ENCODE measurements at regions of chr6 and their contacts with region 1.

Region 1: DNA sequence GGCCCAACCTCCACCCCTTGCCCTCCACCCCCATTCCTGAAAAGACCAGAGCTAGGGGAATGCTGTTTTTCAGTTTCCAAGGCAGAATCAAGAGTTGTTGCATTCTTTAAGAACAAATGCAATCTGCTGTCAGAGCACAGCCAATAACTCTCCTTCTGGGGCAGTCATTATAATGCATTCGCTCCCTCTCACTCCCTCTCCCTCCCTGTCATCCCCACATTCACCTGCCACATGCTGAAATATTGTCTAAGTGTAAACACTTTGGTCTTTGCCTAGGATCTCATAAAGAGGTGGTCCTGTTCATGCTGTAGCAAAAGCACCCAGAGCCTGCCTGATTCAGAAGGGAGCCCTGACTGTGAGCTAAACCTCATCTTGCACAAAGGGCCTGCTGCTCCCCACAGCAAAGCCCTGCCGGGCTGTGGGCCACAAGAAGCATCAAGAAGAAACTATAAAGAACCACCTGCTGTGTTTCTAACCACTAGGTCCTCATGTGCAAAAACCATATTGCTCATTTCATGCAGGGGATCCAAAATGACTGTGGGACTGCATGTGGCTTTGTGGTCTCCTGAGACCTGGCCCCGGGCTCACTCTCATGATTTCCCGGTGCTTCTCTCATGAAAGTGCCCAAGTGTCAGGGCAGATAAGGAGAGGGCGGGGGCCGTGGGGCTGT is 85.6 kb downstream of the GPR6 start:
- DNase-seq: no peak
- H3K4me3 ChIP-seq: no peak overlapping the region
- H3K27ac ChIP-seq: peak overlapping the region in 4 of 59 donors; percentile 12 to 29 (median 21)
- H3K27me3 ChIP-seq: peaks cover 0 to 5% (median 0%) of the 10 kb centered on the region in 45 donors
- CTCF ChIP-seq: no peak

Region 2: DNA sequence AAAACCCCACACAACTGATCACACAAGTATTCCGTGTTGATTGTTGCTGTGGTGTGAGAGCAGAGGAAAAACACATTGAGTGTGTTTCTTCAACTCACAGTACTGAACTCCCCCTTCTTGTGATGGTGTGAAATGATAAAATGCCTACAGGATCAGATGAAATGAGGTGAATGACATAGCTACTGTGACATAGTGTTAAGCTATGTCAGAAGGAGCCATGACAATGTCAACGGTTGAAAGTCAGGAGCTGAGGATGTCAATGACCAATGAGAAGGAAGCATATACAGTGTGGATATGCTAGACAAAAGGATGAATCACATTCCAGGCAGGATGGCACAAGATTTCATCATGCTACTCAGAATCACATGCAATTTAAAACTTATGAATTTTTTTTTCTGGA is 76.9 kb after region 1 on chr6:
- intact Hi-C with region 1: no loop called
- DNase-seq: no peak
- H3K4me3 ChIP-seq: no peak overlapping the region
- H3K27ac ChIP-seq: no peak overlapping the region
- H3K27me3 ChIP-seq: no peaks in the 10 kb centered on the region
- CTCF ChIP-seq: no peak

Region 3: DNA sequence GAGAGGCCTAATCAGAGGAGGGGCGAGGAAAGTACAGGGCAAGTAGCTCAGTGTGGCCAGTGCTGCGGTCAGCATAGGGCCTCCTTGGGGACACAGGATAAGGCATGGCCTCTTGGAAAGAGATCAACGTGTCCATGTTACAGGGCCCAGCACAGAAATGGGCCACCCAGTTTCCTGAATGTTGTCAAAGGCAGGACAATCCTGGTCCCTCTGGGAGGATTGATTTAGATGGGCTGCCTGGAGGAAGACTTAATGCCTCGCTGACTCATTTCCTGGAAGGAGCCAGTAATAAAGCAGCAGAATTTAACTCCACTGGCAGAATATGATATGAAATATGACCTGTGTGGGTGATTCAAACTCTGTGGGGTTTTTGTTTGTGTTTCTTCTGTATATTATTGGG is 335.0 kb after region 1 on chr6:
- intact Hi-C with region 1: loop called in 1 of 2 experiments (anchors 10 kb)
- DNase-seq: no peak
- H3K4me3 ChIP-seq: peak overlapping the region in 1 of 59 donors; percentile 61
- H3K27ac ChIP-seq: no peak overlapping the region
- H3K27me3 ChIP-seq: no peaks in the 10 kb centered on the region
- CTCF ChIP-seq: no peak

Measured in dorsolateral prefrontal cortex (tissue), 120 donors.